GM12878 (cell line): ENCODE measurements at regions of chr12 and their contacts with region 1.

Region 1: GRCh38 chr12:98503592-98504367 is 11.6 kb upstream of the TMPO start:
- DNase-seq: peak; percentile 91
- ATAC-seq: peak; percentile 88
- H3K4me3 ChIP-seq: peak overlapping the region; percentile 75; the same call in 1 of the 2 replicates
- H3K27ac ChIP-seq: peak overlapping the region; percentile 99
- H3K4me1 ChIP-seq: peaks cover 3% of the 10 kb centered on the region; the same call in 1 of the 2 replicates
- H3K27me3 ChIP-seq: no peaks in the 10 kb centered on the region
- CTCF ChIP-seq: no peak
- EP300 ChIP-seq: no peak; a peak in 1 of 4 replicates
- POLR2A ChIP-seq: peak; percentile 89
- RAD21 ChIP-seq: 0 out of 2 replicates have a peak, but pooled peaks have one; percentile 13

Region 2: GRCh38 chr12:98490501-98491453 is 13.0 kb before region 1 on chr12:
- CTCF ChIA-PET with region 1: interaction called, 20 read pairs
- POLR2A ChIA-PET with region 1: interaction called, 6 read pairs
- RAD21 ChIA-PET with region 1: interaction called, 3 read pairs
- SMC1A ChIA-PET with region 1: interaction called, 11 read pairs
- in situ Hi-C with region 1: no loop called
- intact Hi-C with region 1: no loop called
- DNase-seq: peak; percentile 64
- ATAC-seq: peak; percentile 95
- H3K4me3 ChIP-seq: no peak overlapping the region
- H3K27ac ChIP-seq: peak overlapping the region; percentile 32
- H3K4me1 ChIP-seq: peaks cover 3% of the 10 kb centered on the region; the same call in 1 of the 2 replicates
- H3K27me3 ChIP-seq: no peaks in the 10 kb centered on the region; a peak in 1 of 4 replicates
- CTCF ChIP-seq: peak; percentile 82 to 89 (median 85)
- EP300 ChIP-seq: no peak
- POLR2A ChIP-seq: peak; percentile 54; the same call in 1 of the 2 replicates
- RAD21 ChIP-seq: peak; percentile 73